Left lung (tissue), 14 donors: ENCODE measurements at regions of chr2 and their contacts with region 1.

Region 1: DNA sequence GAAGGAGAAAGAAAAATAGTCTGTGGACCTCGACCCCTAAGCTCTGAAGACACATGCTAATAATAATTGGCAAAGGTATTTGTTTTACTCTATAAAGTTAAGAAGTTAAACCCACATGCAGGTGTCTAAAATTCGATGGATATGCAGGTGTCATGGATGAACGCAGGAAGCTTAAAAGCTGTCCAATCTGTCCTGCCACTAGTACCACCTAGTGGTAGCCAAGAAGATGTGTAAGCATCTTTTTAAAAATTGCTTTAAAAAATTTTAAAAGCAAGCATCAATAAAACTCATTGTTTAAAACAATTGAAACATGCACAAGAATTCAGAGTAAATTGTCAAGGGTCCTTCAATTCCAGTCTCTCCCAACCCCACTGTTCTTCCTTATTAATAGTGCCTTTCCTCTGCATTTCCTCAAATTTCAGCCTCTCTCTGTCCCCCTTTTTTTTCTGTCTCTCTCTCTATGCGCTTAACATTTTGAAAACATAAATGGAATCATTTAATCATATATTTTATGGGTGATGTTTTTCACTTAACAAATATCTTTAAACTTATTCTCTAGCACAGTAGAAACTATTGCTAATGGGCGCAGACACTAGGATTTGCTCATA is 30.6 kb upstream of the PPP3R1 start:
- DNase-seq: peak in 1 of 4 donors; percentile 19
- ATAC-seq: peak; percentile 79
- H3K4me3 ChIP-seq: no peak overlapping the region
- H3K27ac ChIP-seq: no peak overlapping the region
- H3K4me1 ChIP-seq: peaks cover 0 to 10% of the 10 kb centered on the region in 2 donors
- H3K27me3 ChIP-seq: no peaks in the 10 kb centered on the region
- CTCF ChIP-seq: peak; percentile 45 to 71

Region 2: GRCh38 chr2:67954093-67954748 is 328.7 kb before region 1 on chr2:
- intact Hi-C with region 1: no loop called
- DNase-seq: peak in 3 of 4 donors; percentile 39 to 89 (median 59)
- ATAC-seq: no peak
- H3K4me3 ChIP-seq: no peak overlapping the region
- H3K27ac ChIP-seq: no peak overlapping the region
- H3K4me1 ChIP-seq: no peaks in the 10 kb centered on the region
- H3K27me3 ChIP-seq: no peaks in the 10 kb centered on the region
- CTCF ChIP-seq: no peak

Region 3: GRCh38 chr2:68040078-68040477 is 242.8 kb before region 1 on chr2:
- intact Hi-C with region 1: no loop called
- DNase-seq: no peak
- ATAC-seq: no peak
- H3K4me3 ChIP-seq: no peak overlapping the region
- H3K27ac ChIP-seq: no peak overlapping the region
- H3K4me1 ChIP-seq: no peaks in the 10 kb centered on the region
- H3K27me3 ChIP-seq: no peaks in the 10 kb centered on the region
- CTCF ChIP-seq: no peak

Region 4: DNA sequence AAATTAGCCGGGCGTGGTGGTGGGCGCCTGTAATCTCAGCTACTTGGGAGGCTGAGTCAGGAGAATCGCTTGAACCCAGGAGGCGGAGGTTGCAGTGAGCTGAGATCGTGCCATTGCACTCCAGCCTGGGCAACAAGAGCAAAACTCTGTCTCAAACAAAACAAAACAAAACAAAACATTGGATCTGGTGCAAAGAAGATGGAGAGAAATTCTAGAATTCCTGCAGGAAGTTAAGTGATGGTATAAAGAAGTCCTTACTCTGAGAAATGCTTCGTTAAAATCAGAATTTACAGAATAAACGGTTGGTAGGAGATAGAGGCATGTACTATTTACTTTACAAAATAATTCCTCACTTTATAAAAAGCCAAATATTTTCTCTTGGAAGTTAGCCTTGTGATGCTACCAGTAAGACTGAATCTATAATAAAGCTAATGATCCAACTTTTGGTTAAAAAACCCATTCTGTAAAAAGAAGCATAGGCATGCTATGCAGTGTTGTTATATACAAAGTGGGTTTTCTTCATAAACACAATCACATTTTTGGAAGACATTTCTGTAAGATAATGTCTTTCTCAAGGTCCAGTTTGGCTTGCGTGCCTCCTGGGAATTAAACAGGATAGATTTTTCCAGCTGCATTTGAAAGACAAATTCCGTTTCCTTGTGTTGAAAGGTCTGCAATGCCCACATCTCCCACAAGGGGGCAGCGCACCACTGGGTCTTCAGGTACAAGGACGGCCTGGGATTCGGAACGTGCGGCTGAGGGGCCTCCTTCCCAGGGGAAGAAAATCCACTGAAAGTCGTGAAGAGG is 160.8 kb before region 1 on chr2:
- intact Hi-C with region 1: loop called in 1 of 2 experiments (anchors 5 kb)
- DNase-seq: peak; percentile 84 to 94 (median 88)
- ATAC-seq: peak; percentile 98
- H3K4me3 ChIP-seq: no peak overlapping the region
- H3K27ac ChIP-seq: no peak overlapping the region
- H3K4me1 ChIP-seq: peaks cover 0 to 14% of the 10 kb centered on the region in 2 donors
- H3K27me3 ChIP-seq: no peaks in the 10 kb centered on the region
- CTCF ChIP-seq: peak; percentile 93 to 97

Region 5: GRCh38 chr2:68336192-68336591 is 53.3 kb after region 1 on chr2:
- intact Hi-C with region 1: loop called in 1 of 2 experiments (anchors 10 kb)
- DNase-seq: no peak
- ATAC-seq: no peak
- H3K4me3 ChIP-seq: no peak overlapping the region
- H3K27ac ChIP-seq: no peak overlapping the region
- H3K4me1 ChIP-seq: no peaks in the 10 kb centered on the region
- H3K27me3 ChIP-seq: no peaks in the 10 kb centered on the region
- CTCF ChIP-seq: no peak